ENCODE measurements at regions of chr3 and their contacts with region 1.

Region 1: DNA sequence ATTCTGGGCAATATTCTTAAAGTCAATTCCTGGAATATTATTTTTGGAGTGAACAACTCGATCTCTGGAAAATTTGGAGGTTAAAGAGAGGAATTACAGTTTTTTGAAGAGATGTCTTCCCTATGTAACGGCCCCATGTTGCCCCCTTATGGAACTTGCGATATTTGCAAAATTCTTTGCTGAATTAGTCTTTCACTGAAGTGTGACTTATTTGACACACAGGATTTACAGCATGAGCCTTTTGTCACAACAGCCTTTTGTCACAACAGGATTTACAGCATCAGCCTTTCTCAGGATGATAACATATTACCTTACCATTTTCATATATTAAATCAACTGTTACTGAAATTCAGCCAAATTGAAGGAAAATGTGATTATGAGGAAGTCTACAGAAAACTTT is 37.8 kb upstream of the SPTSSB start:
- DNase-seq: peak; percentile 55
- ATAC-seq: peak; percentile 62
- H3K4me3 ChIP-seq: no peak overlapping the region
- H3K27ac ChIP-seq: no peak overlapping the region
- H3K4me1 ChIP-seq: peaks cover 77% of the 10 kb centered on the region
- H3K27me3 ChIP-seq: peaks cover 2 to 7% of the 10 kb centered on the region in 2 experiments; a peak in 2 of 5 replicates
- CTCF ChIP-seq: peak; percentile 77
- EP300 ChIP-seq: no peak
- POLR2A ChIP-seq: no peak
- RAD21 ChIP-seq: peak; percentile 74; the same call in 1 of the 2 replicates

Region 2: GRCh38 chr3:161096771-161097355 is 312.2 kb before region 1 on chr3:
- CTCF ChIA-PET with region 1: no interaction called
- POLR2A ChIA-PET with region 1: no interaction called
- in situ Hi-C with region 1: no loop called
- intact Hi-C with region 1: loop called (anchors 5 kb)
- DNase-seq: peak; percentile 38
- ATAC-seq: peak; percentile 78
- H3K4me3 ChIP-seq: no peak overlapping the region
- H3K27ac ChIP-seq: no peak overlapping the region
- H3K4me1 ChIP-seq: peaks cover 10% of the 10 kb centered on the region
- H3K27me3 ChIP-seq: no peaks in the 10 kb centered on the region
- CTCF ChIP-seq: peak; percentile 61
- EP300 ChIP-seq: no peak
- POLR2A ChIP-seq: no peak
- RAD21 ChIP-seq: peak; percentile 43; the same call in 1 of the 2 replicates

Region 3: DNA sequence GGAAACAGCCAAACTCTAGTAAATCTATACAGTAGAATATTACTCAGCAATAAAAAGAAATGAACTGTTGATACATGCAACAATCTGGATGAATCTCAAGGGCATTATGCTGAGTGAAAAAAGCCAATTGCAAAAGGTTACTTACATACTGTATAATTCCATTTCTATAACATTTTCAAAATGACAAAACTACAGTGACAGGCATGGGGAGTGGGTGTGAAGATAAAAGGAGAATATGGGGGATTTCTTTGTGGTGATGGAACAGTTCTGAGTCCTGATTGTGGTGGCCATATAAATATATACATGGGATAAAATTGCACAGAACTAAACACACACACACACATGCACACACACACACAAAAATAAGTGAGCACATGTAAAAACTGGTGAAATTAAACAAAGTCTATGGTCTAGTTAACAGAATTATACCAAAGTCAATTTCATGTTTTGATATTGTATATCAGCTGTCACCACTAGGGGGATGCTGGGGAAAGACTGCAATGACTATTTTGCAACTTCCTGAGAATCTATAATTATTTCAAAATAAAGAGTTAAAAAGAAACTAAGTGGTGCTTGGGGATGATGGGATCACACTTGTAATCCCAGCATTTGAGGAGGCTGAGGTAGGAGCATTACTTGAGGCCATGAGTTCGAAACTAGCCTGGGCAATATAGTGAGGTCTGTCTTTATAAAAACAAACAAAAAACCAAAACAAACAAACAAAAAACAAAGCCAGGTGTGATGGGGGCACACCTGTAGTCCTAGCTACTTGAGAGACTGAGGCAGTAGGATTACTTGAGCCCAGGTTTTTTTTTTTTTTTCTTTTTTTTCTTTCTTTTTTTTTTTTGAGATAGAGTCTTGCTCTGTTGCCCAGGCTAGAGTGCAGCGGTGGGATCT is 103.7 kb before region 1 on chr3:
- CTCF ChIA-PET with region 1: interaction called, 12 read pairs
- POLR2A ChIA-PET with region 1: no interaction called
- in situ Hi-C with region 1: no loop called
- intact Hi-C with region 1: loop called (anchors 1 kb)
- DNase-seq: no peak
- ATAC-seq: no peak
- H3K4me3 ChIP-seq: no peak overlapping the region
- H3K27ac ChIP-seq: no peak overlapping the region
- H3K4me1 ChIP-seq: no peaks in the 10 kb centered on the region
- H3K27me3 ChIP-seq: no peaks in the 10 kb centered on the region
- CTCF ChIP-seq: peak; percentile 46
- EP300 ChIP-seq: no peak
- POLR2A ChIP-seq: no peak
- RAD21 ChIP-seq: peak; percentile 48; the same call in 1 of the 2 replicates

Region 4: GRCh38 chr3:161371430-161372326 is 37.4 kb before region 1 on chr3 and contains the start of gene SPTSSB:
- CTCF ChIA-PET with region 1: no interaction called
- POLR2A ChIA-PET with region 1: no interaction called
- in situ Hi-C with region 1: loop called (anchors 5 kb)
- intact Hi-C with region 1: loop called (anchors 5 kb)
- DNase-seq: peak; percentile 42
- ATAC-seq: peak; percentile 84
- H3K4me3 ChIP-seq: peak within 1 kb of the TSS; percentile 45 to 75 (median 58)
- H3K27ac ChIP-seq: no peak within 1 kb of the TSS
- H3K4me1 ChIP-seq: peaks cover 21% of the 10 kb centered on the region
- H3K27me3 ChIP-seq: peaks cover 3 to 36% of the 10 kb centered on the region in 2 experiments; a peak in 4 of 5 replicates
- CTCF ChIP-seq: peak; percentile 63
- EP300 ChIP-seq: peak in 1 of 2 experiments; percentile 34; a peak in 1 of 4 replicates
- POLR2A ChIP-seq: no peak
- RAD21 ChIP-seq: no peak
- total RNA-seq, gene SPTSSB: 0.51 and 0.84 TPM in 2 replicates